Posterior vena cava (tissue), 2 donors: ENCODE measurements at regions of chr10 and their contacts with region 1.

Region 1: GRCh38 chr10:78491812-78492211 is 458.1 kb downstream of the RPS24 start:
- DNase-seq: no peak

Region 2: GRCh38 chr10:78473006-78473405 is 18.8 kb before region 1 on chr10:
- intact Hi-C with region 1: loop called in 1 of 2 experiments (anchors 1 kb)
- DNase-seq: no peak